HepG2 (cell line): ENCODE measurements at regions of chr1 and their contacts with region 1.

Region 1: GRCh38 chr1:174999216-174999925 is 376 bp upstream of the CACYBP start:
- DNase-seq: peak; percentile 97
- ATAC-seq: peak; percentile 89
- H3K4me3 ChIP-seq: peak overlapping the region; percentile 68 to 92 (median 79)
- H3K27ac ChIP-seq: peak overlapping the region; percentile 98
- H3K4me1 ChIP-seq: peaks cover 69% of the 10 kb centered on the region
- H3K27me3 ChIP-seq: no peaks in the 10 kb centered on the region; a peak in 1 of 5 replicates
- CTCF ChIP-seq: no peak
- EP300 ChIP-seq: peak in 1 of 2 experiments; percentile 41; a peak in 1 of 4 replicates
- POLR2A ChIP-seq: peak; percentile 95 to 97
- RAD21 ChIP-seq: no peak

Region 2: DNA sequence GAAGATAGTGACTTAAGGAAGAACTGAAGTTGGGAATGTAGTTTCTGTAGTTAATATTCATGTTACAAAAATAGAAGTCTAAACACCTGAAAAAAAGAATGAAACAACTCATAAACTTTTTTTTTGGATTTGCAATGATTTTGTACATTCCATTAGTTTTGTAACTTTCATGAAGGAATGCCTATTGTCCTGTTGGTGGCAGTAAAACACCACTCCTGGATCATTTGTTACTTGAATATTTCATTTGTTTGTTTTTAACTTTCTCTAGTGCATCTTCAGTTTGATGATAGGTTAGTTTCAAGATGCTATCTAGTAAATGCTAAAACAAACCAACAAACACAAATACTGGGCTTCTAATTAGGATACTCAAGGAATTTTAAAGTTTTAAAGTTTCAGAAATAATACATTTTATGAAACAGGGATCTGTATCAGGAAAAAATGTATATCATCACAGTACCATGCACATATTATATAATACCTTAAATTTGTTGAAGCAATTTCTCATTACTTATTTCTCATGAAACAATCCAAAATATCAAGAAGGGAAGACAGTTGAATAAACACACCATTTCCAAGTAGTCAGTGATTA is 229.3 kb before region 1 on chr1:
- CTCF ChIA-PET with region 1: interaction called, 26 read pairs
- POLR2A ChIA-PET with region 1: interaction called, 6 read pairs
- in situ Hi-C with region 1: loop called (anchors 5 kb)
- intact Hi-C with region 1: loop called (anchors 1 kb)
- DNase-seq: peak; percentile 49
- ATAC-seq: no peak; the same call in 2 of the 3 replicates
- H3K4me3 ChIP-seq: no peak overlapping the region
- H3K27ac ChIP-seq: no peak overlapping the region
- H3K4me1 ChIP-seq: peaks cover 10% of the 10 kb centered on the region; the same call in 1 of the 2 replicates
- H3K27me3 ChIP-seq: no peaks in the 10 kb centered on the region
- CTCF ChIP-seq: peak; percentile 73
- EP300 ChIP-seq: no peak
- POLR2A ChIP-seq: no peak
- RAD21 ChIP-seq: peak; percentile 55; the same call in 1 of the 2 replicates

Region 3: DNA sequence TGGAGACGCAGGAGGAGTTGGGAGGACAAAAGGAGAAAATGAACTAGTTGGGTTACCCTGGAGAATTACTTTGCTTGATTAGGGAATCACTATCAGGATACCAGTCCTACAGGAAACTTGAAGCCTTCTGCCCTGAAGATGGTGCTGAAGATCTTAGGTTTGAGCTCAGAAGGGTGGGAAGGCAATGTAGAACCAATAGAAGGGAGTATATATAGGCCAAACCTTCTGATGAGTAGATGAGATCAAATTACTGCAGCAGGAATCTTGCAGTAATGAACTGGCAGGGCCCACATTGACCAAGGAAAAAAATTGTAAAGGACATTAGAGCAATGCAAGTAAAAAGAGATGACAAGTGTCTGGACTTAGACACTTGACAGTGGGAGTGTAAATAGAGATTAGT is 116.0 kb before region 1 on chr1:
- CTCF ChIA-PET with region 1: no interaction called
- POLR2A ChIA-PET with region 1: no interaction called
- in situ Hi-C with region 1: no loop called
- intact Hi-C with region 1: loop called (anchors 5 kb)
- DNase-seq: peak; percentile 13
- ATAC-seq: no peak; the same call in 2 of the 3 replicates
- H3K4me3 ChIP-seq: no peak overlapping the region
- H3K27ac ChIP-seq: no peak overlapping the region
- H3K4me1 ChIP-seq: no peaks in the 10 kb centered on the region
- H3K27me3 ChIP-seq: no peaks in the 10 kb centered on the region; a peak in 1 of 5 replicates
- CTCF ChIP-seq: peak; percentile 30
- EP300 ChIP-seq: no peak
- POLR2A ChIP-seq: no peak
- RAD21 ChIP-seq: no peak

Region 4: GRCh38 chr1:174953285-174954072 is 45.9 kb before region 1 on chr1:
- CTCF ChIA-PET with region 1: no interaction called
- POLR2A ChIA-PET with region 1: interaction called, 21 read pairs
- in situ Hi-C with region 1: no loop called
- intact Hi-C with region 1: loop called (anchors 5 kb)
- DNase-seq: peak; percentile 62
- ATAC-seq: peak; percentile 91
- H3K4me3 ChIP-seq: peak overlapping the region in 2 of 3 experiments; percentile 12 to 17; a peak in 1 of 6 replicates
- H3K27ac ChIP-seq: peak overlapping the region; percentile 53
- H3K4me1 ChIP-seq: peaks cover 37% of the 10 kb centered on the region
- H3K27me3 ChIP-seq: no peaks in the 10 kb centered on the region
- CTCF ChIP-seq: no peak
- EP300 ChIP-seq: peak in 1 of 2 experiments; percentile 59; a peak in 1 of 4 replicates
- POLR2A ChIP-seq: no peak
- RAD21 ChIP-seq: no peak

Region 5: GRCh38 chr1:175023043-175023921 is 23.9 kb after region 1 on chr1 and contains the start of gene MRPS14:
- CTCF ChIA-PET with region 1: no interaction called
- POLR2A ChIA-PET with region 1: interaction called, 124 read pairs
- in situ Hi-C with region 1: no loop called
- intact Hi-C with region 1: no loop called
- DNase-seq: peak; percentile 96
- ATAC-seq: peak; percentile 97
- H3K4me3 ChIP-seq: peak within 1 kb of the TSS; percentile 94 to 99 (median 99)
- H3K27ac ChIP-seq: peak within 1 kb of the TSS; percentile 90
- H3K4me1 ChIP-seq: peaks cover 19% of the 10 kb centered on the region
- H3K27me3 ChIP-seq: no peaks in the 10 kb centered on the region; a peak in 1 of 5 replicates
- CTCF ChIP-seq: no peak
- EP300 ChIP-seq: peak in 1 of 2 experiments; percentile 49; a peak in 2 of 4 replicates
- POLR2A ChIP-seq: peak; percentile 88 to 92
- RAD21 ChIP-seq: no peak
- total RNA-seq, gene MRPS14: 43.2 and 52.7 TPM in 2 replicates